ENCODE measurements at regions of chr2 and their contacts with region 1.

Region 1: GRCh38 chr2:57510704-57511103 is 535.9 kb upstream of the VRK2 start:
- DNase-seq: no peak
- ATAC-seq: no peak

Region 2: DNA sequence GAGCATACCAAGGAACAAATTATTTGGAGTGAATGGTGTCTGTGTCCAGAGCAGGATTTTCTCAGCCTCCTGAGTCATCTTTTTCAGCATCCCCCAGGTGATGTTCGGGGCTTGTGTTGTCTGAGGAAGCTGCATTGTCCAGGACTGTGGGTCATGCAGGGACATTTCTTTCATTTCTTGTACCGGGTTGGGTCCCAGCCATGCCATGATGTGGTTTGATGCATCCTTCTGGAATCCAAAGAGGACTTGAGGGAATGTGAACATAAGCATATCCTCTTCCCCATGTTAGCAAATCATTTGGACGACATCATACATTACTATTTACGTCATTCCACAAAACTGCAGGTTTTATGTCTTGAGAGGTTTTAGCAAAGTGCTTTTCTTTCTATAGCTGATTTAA is 529.1 kb before region 1 on chr2:
- intact Hi-C with region 1: loop called (anchors 10 kb)
- DNase-seq: no peak
- ATAC-seq: no peak

Region 3: GRCh38 chr2:57107353-57107752 is 403.4 kb before region 1 on chr2:
- intact Hi-C with region 1: no loop called
- DNase-seq: no peak
- ATAC-seq: no peak